ENCODE measurements at regions of chr9 and their contacts with region 1.

Region 1: GRCh38 chr9:34025062-34025461 is 23.6 kb downstream of the UBAP2 start:
- DNase-seq: no peak
- H3K4me3 ChIP-seq: no peak overlapping the region
- H3K27me3 ChIP-seq: no peaks in the 10 kb centered on the region
- CTCF ChIP-seq: no peak

Region 2: DNA sequence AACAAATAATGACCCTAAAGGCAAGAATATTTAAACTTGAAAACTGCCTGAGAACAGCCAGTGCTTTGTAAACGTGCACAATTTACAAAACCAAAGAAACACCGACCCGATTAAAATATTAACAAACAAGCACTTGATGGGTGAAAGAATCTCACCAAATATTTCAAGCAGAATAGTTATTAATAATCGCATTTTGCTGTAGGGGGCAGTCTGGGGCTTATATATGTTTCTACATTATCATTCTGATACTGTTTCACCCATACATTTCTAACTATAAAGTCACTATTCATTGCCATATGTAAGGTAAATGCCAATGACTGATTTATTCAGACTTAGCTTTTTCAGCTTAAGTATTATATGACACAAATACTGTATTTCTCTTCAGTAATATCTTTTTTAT is 14.1 kb before region 1 on chr9:
- CTCF ChIA-PET with region 1: interaction called, 12 read pairs
- POLR2A ChIA-PET with region 1: no interaction called
- DNase-seq: no peak
- H3K4me3 ChIP-seq: no peak overlapping the region
- H3K27me3 ChIP-seq: no peaks in the 10 kb centered on the region
- CTCF ChIP-seq: peak; percentile 33; the same call in 1 of the 2 replicates

Measured in BJ (cell line).